Activated T-helper 1 cell treated with anti-CD3 and anti-CD28 coated beads, Interleukin-12 subunit alpha, Interleukin-12 subunit beta, Interleukin-2, Interleukin-4 antibody, amounts not matched to agents 30 ng/mL and 10 ng/mL and 1 ng/mL, durations not matched to agents 14 hours and 24 hours and 36 hours (primary cell): ENCODE measurements at regions of chrX and their contacts with region 1.

Region 1: DNA sequence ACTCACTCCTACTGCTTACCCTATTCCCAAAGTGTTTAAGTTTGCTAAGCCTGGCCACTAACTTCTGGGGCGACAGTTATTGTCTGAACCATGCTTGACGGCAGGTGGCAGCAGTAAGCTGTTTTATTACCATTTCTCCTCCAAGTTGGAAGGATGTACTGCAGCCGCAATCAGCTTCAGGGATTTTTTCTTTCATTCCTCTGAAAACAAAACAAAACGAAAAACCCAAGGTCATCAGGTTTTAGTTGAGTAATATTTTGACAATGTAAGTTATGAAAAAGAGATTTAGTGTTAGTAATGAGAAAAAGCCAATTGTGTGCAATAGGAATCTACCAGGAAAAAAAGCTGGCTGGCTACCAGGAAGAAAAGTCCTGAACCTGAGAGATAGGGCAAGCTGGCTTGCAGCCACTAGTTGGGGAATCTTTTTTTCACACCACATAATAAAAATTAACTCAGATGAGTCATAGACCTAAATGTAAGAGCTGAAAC is 13.2 kb upstream of the RAB9B start:
- DNase-seq: peak; percentile 3
- H3K4me3 Mint-ChIP-seq: no peak overlapping the region
- H3K27ac Mint-ChIP-seq: no peak overlapping the region
- H3K4me1 Mint-ChIP-seq: peaks cover 7% of the 10 kb centered on the region
- H3K27me3 Mint-ChIP-seq: peaks cover 7% of the 10 kb centered on the region

Region 2: DNA sequence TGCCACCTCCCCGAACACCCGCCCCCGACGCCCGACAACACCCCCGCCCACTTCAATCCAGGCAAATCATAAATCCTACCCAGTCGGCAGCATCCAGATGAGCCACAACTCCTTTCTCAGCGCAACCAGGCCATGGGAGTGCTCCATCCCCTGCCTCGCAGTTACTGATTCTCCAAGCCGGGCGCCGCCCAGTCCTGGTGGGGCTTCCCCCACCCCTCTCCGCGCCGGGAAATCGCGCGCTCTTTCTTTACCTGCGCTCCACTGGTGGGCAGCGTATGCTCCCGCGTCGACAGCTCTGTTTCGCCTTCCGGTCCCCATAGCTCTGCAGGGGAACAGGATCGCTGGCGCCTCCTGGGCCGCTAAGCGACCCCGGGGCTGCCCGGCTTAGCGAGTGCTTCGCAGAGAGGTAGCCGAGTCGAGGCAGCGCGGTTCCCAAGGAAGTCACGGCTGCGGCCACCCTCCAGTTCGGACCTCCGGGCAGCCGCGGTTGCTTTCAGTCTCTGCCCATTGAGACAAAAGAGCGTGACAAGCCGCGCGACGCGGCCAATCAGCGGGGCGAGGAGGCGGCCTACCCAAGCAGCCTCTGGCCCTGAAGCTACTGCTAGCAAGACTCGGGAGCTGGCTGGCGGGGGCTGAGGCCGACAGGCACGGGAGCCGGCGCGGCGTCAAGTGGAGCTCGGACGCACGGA is 73.5 kb after region 1 on chrX:
- intact Hi-C with region 1: no loop called
- DNase-seq: peak; percentile 57
- H3K4me3 Mint-ChIP-seq: peak overlapping the region; percentile 93
- H3K27ac Mint-ChIP-seq: peak overlapping the region; percentile 91
- H3K4me1 Mint-ChIP-seq: peaks cover 17% of the 10 kb centered on the region
- H3K27me3 Mint-ChIP-seq: no peaks in the 10 kb centered on the region

Region 3: GRCh38 chrX:103941201-103941975 is 96.2 kb after region 1 on chrX:
- intact Hi-C with region 1: loop called (anchors 1 kb)
- DNase-seq: no peak
- H3K4me3 Mint-ChIP-seq: no peak overlapping the region
- H3K27ac Mint-ChIP-seq: no peak overlapping the region
- H3K4me1 Mint-ChIP-seq: peaks cover 35% of the 10 kb centered on the region
- H3K27me3 Mint-ChIP-seq: no peaks in the 10 kb centered on the region

Region 4: GRCh38 chrX:104112326-104112951 is 267.2 kb after region 1 on chrX and contains the start of gene ZCCHC18:
- intact Hi-C with region 1: loop called (anchors 1 kb)
- DNase-seq: peak; percentile 5
- H3K4me3 Mint-ChIP-seq: peak within 1 kb of the TSS; percentile 83
- H3K27ac Mint-ChIP-seq: peak within 1 kb of the TSS; percentile 29
- H3K4me1 Mint-ChIP-seq: peaks cover 10% of the 10 kb centered on the region
- H3K27me3 Mint-ChIP-seq: peaks cover 8% of the 10 kb centered on the region
- total RNA-seq, gene ZCCHC18: 0.57 and 0.76 TPM in 2 replicates

Region 5: DNA sequence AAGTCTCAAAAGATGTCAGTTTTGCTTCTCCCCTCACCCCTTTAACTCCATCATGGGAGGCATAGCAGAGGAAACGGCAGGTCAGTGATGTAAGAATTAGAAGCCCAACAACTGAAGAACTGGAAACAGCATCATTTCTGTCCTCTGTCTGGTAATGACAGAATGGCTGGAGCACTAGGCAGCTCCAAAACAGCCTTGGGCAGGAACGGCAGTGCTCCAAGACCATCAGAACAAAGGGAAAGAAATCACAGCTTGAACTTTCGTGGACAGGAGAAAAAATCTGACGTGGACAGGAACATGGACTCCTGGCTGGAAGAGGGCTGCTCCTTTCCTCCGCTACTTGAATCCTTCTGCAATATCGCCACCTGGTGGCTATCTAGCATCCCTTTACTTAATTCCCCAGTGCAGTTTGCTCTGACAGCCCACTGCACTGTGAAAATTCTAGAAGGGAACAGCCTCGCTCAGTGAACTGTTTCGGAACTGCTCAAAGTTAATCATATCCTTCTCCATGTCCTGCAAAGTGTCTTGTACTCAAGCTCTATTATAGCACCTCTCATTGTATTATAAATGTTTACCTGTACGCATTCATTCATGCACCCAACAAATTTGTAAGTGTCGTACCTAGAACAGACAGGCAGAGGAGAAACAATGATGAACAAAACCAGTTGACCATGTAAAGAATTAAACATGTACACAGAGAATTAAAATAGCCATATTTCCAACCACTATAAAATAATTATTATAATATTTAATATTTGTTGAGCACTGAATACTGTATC is 291.2 kb after region 1 on chrX:
- intact Hi-C with region 1: loop called (anchors 1 kb)
- DNase-seq: peak; percentile 11
- H3K4me3 Mint-ChIP-seq: no peak overlapping the region
- H3K27ac Mint-ChIP-seq: no peak overlapping the region
- H3K4me1 Mint-ChIP-seq: peaks cover 19% of the 10 kb centered on the region
- H3K27me3 Mint-ChIP-seq: no peaks in the 10 kb centered on the region